ENCODE measurements at regions of chr15 and their contacts with region 1.

Region 1: GRCh38 chr15:74768771-74769342 is 13.0 kb upstream of the CSK start:
- DNase-seq: peak; percentile 71 to 93
- ATAC-seq: peak; percentile 60 to 73
- H3K4me3 ChIP-seq: peak overlapping the region; percentile 26; the same call in 2 of the 3 replicates
- H3K27ac ChIP-seq: peak overlapping the region; percentile 41 to 57; a peak in 4 of 6 replicates
- H3K4me1 ChIP-seq: peaks cover 7% of the 10 kb centered on the region; the same call in 2 of the 3 replicates
- CTCF ChIP-seq: peak; percentile 95
- EP300 ChIP-seq: no peak
- POLR2A ChIP-seq: no peak
- RAD21 ChIP-seq: peak; percentile 97

Region 2: DNA sequence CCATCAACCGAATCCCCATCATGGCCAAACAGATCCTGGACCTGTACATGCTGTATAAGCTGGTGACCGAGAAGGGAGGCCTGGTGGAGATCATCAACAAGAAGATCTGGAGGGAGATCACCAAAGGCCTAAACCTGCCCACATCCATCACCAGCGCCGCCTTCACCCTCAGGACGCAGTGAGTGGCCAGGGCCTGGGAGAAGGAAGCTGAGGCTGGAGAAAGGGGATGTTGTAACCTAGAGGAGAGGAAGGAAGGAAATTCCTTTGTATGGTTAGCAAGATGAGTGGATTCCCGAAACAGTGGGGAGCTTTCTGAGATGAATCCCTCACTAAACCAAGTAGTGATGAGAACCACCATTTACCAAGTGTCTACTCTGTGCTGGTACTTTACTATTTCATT is 179.0 kb before region 1 on chr15:
- CTCF ChIA-PET with region 1: no interaction called
- POLR2A ChIA-PET with region 1: no interaction called
- DNase-seq: no peak
- ATAC-seq: no peak
- H3K4me3 ChIP-seq: no peak overlapping the region
- H3K27ac ChIP-seq: no peak overlapping the region
- H3K4me1 ChIP-seq: no peaks in the 10 kb centered on the region
- CTCF ChIP-seq: no peak
- EP300 ChIP-seq: no peak
- POLR2A ChIP-seq: no peak
- RAD21 ChIP-seq: no peak

Region 3: DNA sequence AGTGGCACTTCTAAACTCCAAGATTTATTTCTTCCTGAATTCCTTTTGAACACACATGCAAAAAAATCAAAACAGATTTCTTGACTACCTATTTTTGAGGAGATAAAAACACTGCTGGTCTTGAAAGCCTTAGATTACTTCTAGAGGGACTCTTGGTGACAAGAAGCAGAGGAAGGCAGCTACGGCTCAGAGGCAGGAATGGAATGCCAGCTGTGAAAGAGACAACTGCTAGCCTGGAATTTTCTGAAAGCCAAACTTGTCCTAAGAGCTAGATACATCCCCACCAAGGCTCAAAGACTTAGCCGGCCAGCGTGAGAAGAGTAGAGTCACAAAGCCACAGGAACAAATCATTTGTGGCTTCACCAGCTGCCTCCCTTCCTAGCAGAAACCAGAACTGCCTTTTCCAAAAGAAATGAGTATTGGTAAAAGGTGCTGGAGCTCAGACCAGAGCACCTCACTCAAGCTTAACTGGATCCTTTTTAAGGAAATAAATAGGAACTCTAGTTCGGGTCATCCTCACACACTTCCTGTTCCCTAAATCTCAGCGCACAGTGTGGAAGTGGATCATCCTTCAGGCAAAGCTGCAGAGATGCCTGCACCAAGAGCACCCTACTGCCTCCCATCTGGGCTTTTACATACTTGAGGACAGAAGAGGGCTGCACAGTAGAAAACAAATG is 120.6 kb before region 1 on chr15:
- CTCF ChIA-PET with region 1: interaction called, 701 read pairs
- POLR2A ChIA-PET with region 1: no interaction called
- DNase-seq: no peak
- ATAC-seq: no peak
- H3K4me3 ChIP-seq: no peak overlapping the region
- H3K27ac ChIP-seq: no peak overlapping the region
- H3K4me1 ChIP-seq: no peaks in the 10 kb centered on the region
- CTCF ChIP-seq: no peak
- EP300 ChIP-seq: no peak
- POLR2A ChIP-seq: no peak
- RAD21 ChIP-seq: no peak

Region 4: GRCh38 chr15:74664028-74664616 is 104.7 kb before region 1 on chr15:
- CTCF ChIA-PET with region 1: interaction called, 33 read pairs
- POLR2A ChIA-PET with region 1: no interaction called
- DNase-seq: peak in 1 of 2 experiments; percentile 14
- ATAC-seq: peak; percentile 47 to 73; a peak in 4 of 6 replicates
- H3K4me3 ChIP-seq: no peak overlapping the region
- H3K27ac ChIP-seq: peak overlapping the region in 1 of 2 experiments; percentile 61; a peak in 1 of 6 replicates
- H3K4me1 ChIP-seq: peaks cover 17% of the 10 kb centered on the region; the same call in 2 of the 3 replicates
- CTCF ChIP-seq: no peak
- EP300 ChIP-seq: no peak
- POLR2A ChIP-seq: no peak
- RAD21 ChIP-seq: no peak

Region 5: GRCh38 chr15:74781431-74782258 is 12.8 kb after region 1 on chr15 and contains the start of gene CSK:
- CTCF ChIA-PET with region 1: interaction called, 1,908 read pairs
- POLR2A ChIA-PET with region 1: interaction called, 3 read pairs
- DNase-seq: peak; percentile 67 to 86
- ATAC-seq: peak; percentile 64 to 82
- H3K4me3 ChIP-seq: peak within 1 kb of the TSS; percentile 97
- H3K27ac ChIP-seq: peak within 1 kb of the TSS; percentile 97 to 98
- H3K4me1 ChIP-seq: peaks cover 22% of the 10 kb centered on the region
- CTCF ChIP-seq: peak; percentile 97
- EP300 ChIP-seq: no peak
- POLR2A ChIP-seq: peak; percentile 88
- RAD21 ChIP-seq: no peak
- polyA plus RNA-seq, gene CSK: 17.8 and 22.2 TPM in 2 replicates